Activated B cell treated with CpG ODN at 0.5 μM for 24 hours (primary cell): ENCODE measurements at regions of chr19 and their contacts with region 1.

Region 1: GRCh38 chr19:38634757-38635482 is 12.5 kb upstream of the ACTN4 start:
- DNase-seq: peak; percentile 73
- ATAC-seq: peak; percentile 51
- H3K4me3 Mint-ChIP-seq: no peak overlapping the region
- H3K27ac Mint-ChIP-seq: peak overlapping the region; percentile 79
- H3K4me1 Mint-ChIP-seq: peaks cover 29% of the 10 kb centered on the region
- H3K27me3 Mint-ChIP-seq: no peaks in the 10 kb centered on the region
- CTCF ChIP-seq: peak; percentile 76

Region 2: GRCh38 chr19:38506723-38507550 is 128.0 kb before region 1 on chr19:
- CTCF ChIA-PET with region 1: no interaction called
- POLR2A ChIA-PET with region 1: no interaction called
- intact Hi-C with region 1: no loop called
- DNase-seq: peak; percentile 78
- ATAC-seq: peak; percentile 95
- H3K4me3 Mint-ChIP-seq: peak overlapping the region; percentile 28
- H3K27ac Mint-ChIP-seq: no peak overlapping the region
- H3K4me1 Mint-ChIP-seq: peaks cover 6% of the 10 kb centered on the region
- H3K27me3 Mint-ChIP-seq: peaks cover 19% of the 10 kb centered on the region
- CTCF ChIP-seq: no peak

Region 3: DNA sequence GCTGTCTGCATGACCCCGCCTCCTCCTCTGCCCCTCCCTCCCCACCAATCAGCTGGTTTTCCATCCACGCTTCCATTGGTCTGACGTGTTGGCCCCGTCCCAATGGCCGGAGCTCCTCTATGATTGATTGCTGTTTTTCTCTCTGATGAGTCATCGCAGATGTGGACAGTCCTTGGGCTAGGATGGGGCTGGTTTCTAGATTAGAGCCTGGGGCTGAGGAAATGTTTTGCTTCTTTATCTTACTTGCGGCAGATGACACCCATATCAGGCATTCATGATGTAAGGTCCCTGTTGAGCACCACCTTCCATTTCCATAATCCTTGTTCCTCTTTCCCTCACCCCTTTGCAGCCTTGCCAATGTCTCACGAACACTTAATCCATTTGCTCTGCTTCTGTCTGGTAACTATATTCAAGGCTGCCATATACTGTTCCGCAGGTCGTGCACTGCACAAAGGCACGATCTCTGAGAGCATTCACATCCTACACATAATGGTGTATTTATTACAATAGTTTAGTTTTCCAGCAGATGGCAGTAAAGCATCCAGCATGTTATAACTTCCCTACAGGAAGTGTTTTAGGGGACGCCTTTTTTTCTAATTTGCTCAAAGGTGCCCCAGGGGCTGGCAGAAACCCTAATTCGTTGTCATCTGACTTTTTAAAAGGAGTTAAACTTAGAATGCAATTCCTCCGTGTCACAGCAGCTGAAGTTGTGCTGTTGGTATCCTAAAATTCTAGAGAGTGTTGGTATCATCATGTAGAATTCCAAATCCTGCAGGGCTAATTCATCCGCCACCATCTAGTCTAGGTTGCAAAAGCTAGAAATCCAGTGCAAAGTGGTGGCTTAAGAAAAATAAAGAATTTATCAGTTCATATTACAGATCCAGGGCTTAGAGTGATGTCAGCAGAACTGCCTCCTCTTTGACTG is 90.6 kb before region 1 on chr19:
- CTCF ChIA-PET with region 1: interaction called, 53 read pairs
- POLR2A ChIA-PET with region 1: interaction called, 17 read pairs
- intact Hi-C with region 1: loop called (anchors 1 kb)
- DNase-seq: no peak
- ATAC-seq: peak; percentile 65
- H3K4me3 Mint-ChIP-seq: peak overlapping the region; percentile 11
- H3K27ac Mint-ChIP-seq: peak overlapping the region; percentile 30
- H3K4me1 Mint-ChIP-seq: peaks cover 33% of the 10 kb centered on the region
- H3K27me3 Mint-ChIP-seq: no peaks in the 10 kb centered on the region
- CTCF ChIP-seq: peak; percentile 41

Region 4: DNA sequence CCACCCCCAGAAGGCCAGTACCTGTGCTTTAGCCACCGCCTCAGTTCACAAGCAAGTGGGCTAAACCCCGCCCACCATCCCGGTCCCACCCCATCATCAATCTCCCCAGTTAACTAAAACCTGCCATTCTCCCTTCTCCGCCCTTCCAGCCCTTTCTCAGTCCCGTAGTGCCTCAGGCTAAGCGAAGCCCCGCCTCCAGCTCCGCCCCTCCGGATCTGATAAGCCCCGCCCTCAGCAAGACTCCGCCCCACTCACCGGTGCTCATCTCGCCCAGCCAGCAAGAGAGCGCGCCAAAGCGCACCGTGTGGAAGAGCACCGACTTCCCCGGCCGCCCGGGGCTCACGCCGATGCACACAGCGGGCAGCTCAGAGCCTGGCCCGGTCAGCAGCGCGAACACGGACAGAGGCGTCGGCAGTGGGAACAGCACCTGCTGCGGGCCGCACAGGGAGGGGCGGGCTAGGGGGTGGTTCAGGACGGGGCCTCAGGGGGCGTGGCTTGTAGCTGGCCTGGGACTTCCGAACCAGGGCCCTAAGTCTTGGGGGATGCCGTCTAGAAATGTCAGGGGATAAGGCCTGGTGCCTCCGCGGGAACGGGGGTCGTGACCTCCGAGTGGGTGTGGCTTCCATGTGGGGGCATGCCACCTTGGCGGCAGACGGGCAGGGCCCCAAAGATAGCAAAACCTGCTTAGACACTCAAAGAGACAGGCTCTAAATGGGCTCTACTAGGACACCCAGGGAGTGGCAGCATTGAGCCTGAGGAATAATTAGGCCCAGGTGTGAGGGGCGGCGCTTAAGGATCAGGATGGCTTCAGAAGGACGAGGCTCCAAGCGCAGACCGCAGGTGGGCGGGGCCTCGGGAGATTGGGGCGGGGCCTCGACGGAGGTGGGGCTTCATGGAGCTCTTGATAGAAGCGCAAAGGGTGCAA is 38.6 kb before region 1 on chr19:
- CTCF ChIA-PET with region 1: no interaction called
- POLR2A ChIA-PET with region 1: interaction called, 11 read pairs
- intact Hi-C with region 1: no loop called
- DNase-seq: no peak
- ATAC-seq: peak; percentile 42
- H3K4me3 Mint-ChIP-seq: no peak overlapping the region
- H3K27ac Mint-ChIP-seq: no peak overlapping the region
- H3K4me1 Mint-ChIP-seq: no peaks in the 10 kb centered on the region
- H3K27me3 Mint-ChIP-seq: no peaks in the 10 kb centered on the region
- CTCF ChIP-seq: no peak

Region 5: GRCh38 chr19:38647368-38647965 is 12.5 kb after region 1 on chr19 and contains the start of gene ACTN4:
- CTCF ChIA-PET with region 1: interaction called, 7 read pairs
- POLR2A ChIA-PET with region 1: interaction called, 4 read pairs
- intact Hi-C with region 1: loop called (anchors 1 kb)
- DNase-seq: peak; percentile 100
- ATAC-seq: peak; percentile 91
- H3K4me3 Mint-ChIP-seq: peak within 1 kb of the TSS; percentile 95
- H3K27ac Mint-ChIP-seq: peak within 1 kb of the TSS; percentile 82
- H3K4me1 Mint-ChIP-seq: peaks cover 42% of the 10 kb centered on the region
- H3K27me3 Mint-ChIP-seq: no peaks in the 10 kb centered on the region
- CTCF ChIP-seq: no peak
- total RNA-seq, gene ACTN4: 197 and 198 TPM in 2 replicates

Region 6: GRCh38 chr19:38727868-38728660 is 93.1 kb after region 1 on chr19:
- CTCF ChIA-PET with region 1: no interaction called
- POLR2A ChIA-PET with region 1: no interaction called
- intact Hi-C with region 1: no loop called
- DNase-seq: no peak
- ATAC-seq: no peak
- H3K4me3 Mint-ChIP-seq: no peak overlapping the region
- H3K27ac Mint-ChIP-seq: no peak overlapping the region
- H3K4me1 Mint-ChIP-seq: peaks cover 7% of the 10 kb centered on the region
- H3K27me3 Mint-ChIP-seq: no peaks in the 10 kb centered on the region
- CTCF ChIP-seq: no peak

Region 7: GRCh38 chr19:38952395-38953165 is 317.7 kb after region 1 on chr19:
- CTCF ChIA-PET with region 1: no interaction called
- POLR2A ChIA-PET with region 1: no interaction called
- intact Hi-C with region 1: loop called (anchors 1 kb)
- DNase-seq: no peak
- ATAC-seq: peak; percentile 37
- H3K4me3 Mint-ChIP-seq: no peak overlapping the region
- H3K27ac Mint-ChIP-seq: no peak overlapping the region
- H3K4me1 Mint-ChIP-seq: peaks cover 14% of the 10 kb centered on the region
- H3K27me3 Mint-ChIP-seq: peaks cover 26% of the 10 kb centered on the region
- CTCF ChIP-seq: no peak